HCT116 (cell line): ENCODE measurements at regions of chr17 and their contacts with region 1.

Region 1: GRCh38 chr17:64129764-64130558 is at the start of gene ERN1:
- DNase-seq: peak; percentile 86
- ATAC-seq: peak; percentile 92
- H3K4me3 ChIP-seq: peak within 1 kb of the TSS; percentile 56 to 77
- H3K27ac ChIP-seq: peak within 1 kb of the TSS; percentile 74
- H3K4me1 ChIP-seq: peaks cover 11 to 20% of the 10 kb centered on the region in 2 experiments
- H3K27me3 ChIP-seq: no peaks in the 10 kb centered on the region
- CTCF ChIP-seq: no peak
- POLR2A ChIP-seq: peak; percentile 92
- RAD21 ChIP-seq: peak; percentile 11; the same call in 1 of the 2 replicates
- total RNA-seq, gene ERN1: 28.2 TPM

Region 2: DNA sequence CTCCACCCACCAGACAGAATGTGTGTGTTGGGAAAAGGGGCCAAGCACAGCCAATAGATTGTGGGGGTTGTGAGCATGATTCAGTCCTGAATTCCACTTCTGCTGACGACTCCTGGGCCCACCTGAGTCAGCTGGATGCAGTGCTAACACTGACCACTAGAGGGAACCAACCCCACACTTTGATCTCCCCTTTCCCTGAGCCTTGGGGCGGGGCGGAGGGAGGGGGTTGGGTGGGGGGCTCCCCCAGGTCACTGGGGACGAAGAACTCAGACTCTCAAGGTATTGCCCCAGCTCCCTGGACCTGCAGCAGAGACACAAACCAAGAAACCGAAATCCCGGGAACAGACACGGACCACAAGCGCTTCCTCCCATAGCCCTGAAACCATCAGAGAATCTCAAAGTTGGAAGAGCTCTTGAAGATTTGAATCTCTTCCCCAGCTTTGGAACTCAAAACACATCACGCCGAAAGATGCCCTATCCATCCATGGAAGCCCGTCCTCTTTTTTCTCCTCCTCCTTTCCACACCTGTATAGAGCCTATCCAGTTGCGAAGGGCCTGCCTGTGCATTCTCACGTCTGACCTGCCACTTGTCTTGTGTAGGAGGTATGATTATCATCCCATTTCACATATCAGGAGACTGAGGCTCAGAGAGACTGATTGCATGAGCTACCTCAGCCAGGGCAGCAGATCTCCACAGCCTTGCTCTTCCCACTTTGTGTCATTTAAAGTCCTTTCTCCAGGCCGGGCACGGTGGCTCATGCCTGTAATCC is 218.1 kb before region 1 on chr17:
- CTCF ChIA-PET with region 1: interaction called, 28 read pairs
- POLR2A ChIA-PET with region 1: no interaction called
- RAD21 ChIA-PET with region 1: interaction called in 1 of 2 experiments, 7 read pairs
- intact Hi-C with region 1: no loop called
- DNase-seq: peak; percentile 16
- ATAC-seq: peak; percentile 86
- H3K4me3 ChIP-seq: no peak overlapping the region
- H3K27ac ChIP-seq: no peak overlapping the region
- H3K4me1 ChIP-seq: no peaks in the 10 kb centered on the region
- H3K27me3 ChIP-seq: no peaks in the 10 kb centered on the region; the same call in 1 of the 2 replicates
- CTCF ChIP-seq: peak; percentile 57 to 78 (median 59); a peak in 4 of 6 replicates
- POLR2A ChIP-seq: no peak
- RAD21 ChIP-seq: peak; percentile 62

Region 3: GRCh38 chr17:63946440-63947367 is 183.3 kb before region 1 on chr17:
- CTCF ChIA-PET with region 1: interaction called, 22 read pairs
- POLR2A ChIA-PET with region 1: interaction called, 3 read pairs
- RAD21 ChIA-PET with region 1: interaction called in 1 of 2 experiments, 5 read pairs
- intact Hi-C with region 1: no loop called
- DNase-seq: peak; percentile 22
- ATAC-seq: peak; percentile 86
- H3K4me3 ChIP-seq: no peak overlapping the region
- H3K27ac ChIP-seq: no peak overlapping the region
- H3K4me1 ChIP-seq: peaks cover 0 to 10% of the 10 kb centered on the region in 2 experiments; a peak in 1 of 4 replicates
- H3K27me3 ChIP-seq: no peaks in the 10 kb centered on the region
- CTCF ChIP-seq: peak; percentile 58 to 83 (median 83)
- POLR2A ChIP-seq: no peak
- RAD21 ChIP-seq: no peak; the same call in 1 of the 2 replicates

Region 4: GRCh38 chr17:64025732-64026294 is 104.1 kb before region 1 on chr17:
- CTCF ChIA-PET with region 1: interaction called, 519 read pairs
- POLR2A ChIA-PET with region 1: interaction called, 21 read pairs
- RAD21 ChIA-PET with region 1: interaction called, 44 to 66 read pairs
- intact Hi-C with region 1: loop called (anchors 1 kb)
- DNase-seq: peak; percentile 84
- ATAC-seq: peak; percentile 97
- H3K4me3 ChIP-seq: peak overlapping the region; percentile 45 to 50
- H3K27ac ChIP-seq: no peak overlapping the region
- H3K4me1 ChIP-seq: peaks cover 3 to 11% of the 10 kb centered on the region in 2 experiments; a peak in 3 of 4 replicates
- H3K27me3 ChIP-seq: no peaks in the 10 kb centered on the region
- CTCF ChIP-seq: peak; percentile 99 to 100 (median 100)
- POLR2A ChIP-seq: peak; percentile 63
- RAD21 ChIP-seq: peak; percentile 88

Region 5: GRCh38 chr17:64063766-64064224 is 66.2 kb before region 1 on chr17:
- CTCF ChIA-PET with region 1: interaction called, 158 read pairs
- POLR2A ChIA-PET with region 1: interaction called, 8 read pairs
- RAD21 ChIA-PET with region 1: interaction called, 28 to 36 read pairs
- intact Hi-C with region 1: loop called (anchors 1 kb)
- DNase-seq: no peak
- ATAC-seq: peak; percentile 97
- H3K4me3 ChIP-seq: no peak overlapping the region
- H3K27ac ChIP-seq: no peak overlapping the region
- H3K4me1 ChIP-seq: no peaks in the 10 kb centered on the region
- H3K27me3 ChIP-seq: no peaks in the 10 kb centered on the region
- CTCF ChIP-seq: peak; percentile 45 to 81 (median 72)
- POLR2A ChIP-seq: no peak
- RAD21 ChIP-seq: peak; percentile 91

Region 6: DNA sequence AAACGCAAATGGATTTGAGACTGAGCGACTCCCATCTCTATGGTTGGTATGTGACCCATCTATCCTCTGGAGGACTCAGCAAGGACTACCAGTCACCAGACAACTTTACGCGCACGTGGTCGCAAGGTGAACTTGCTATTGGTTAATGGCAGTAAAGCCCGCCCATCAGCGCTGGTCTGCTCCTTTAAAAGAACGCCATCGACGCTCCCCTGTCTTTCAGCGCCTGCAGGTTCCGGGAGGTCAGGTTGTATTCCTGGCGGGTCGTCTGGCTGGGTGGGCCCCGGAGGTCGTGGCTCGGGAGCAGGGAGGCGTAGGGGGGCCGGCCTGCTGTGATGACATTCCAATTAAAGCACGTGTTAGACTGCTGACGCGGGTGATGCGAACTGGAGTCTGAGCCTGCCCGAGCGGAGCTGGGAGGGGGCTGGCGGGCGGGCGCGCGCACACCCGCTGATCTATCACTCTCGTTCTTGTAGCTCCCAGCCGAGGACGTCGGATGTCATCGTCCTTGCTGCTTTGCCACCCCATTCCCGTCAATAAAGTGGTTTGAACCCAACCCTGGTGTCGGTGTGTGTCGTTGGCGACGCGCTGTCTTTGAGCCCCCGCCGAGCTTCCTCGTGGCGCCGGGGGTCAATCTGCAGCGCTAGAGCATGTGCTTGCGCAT is 15.9 kb after region 1 on chr17:
- CTCF ChIA-PET with region 1: interaction called, 26 read pairs
- POLR2A ChIA-PET with region 1: interaction called, 57 read pairs
- RAD21 ChIA-PET with region 1: interaction called in 1 of 2 experiments, 4 read pairs
- intact Hi-C with region 1: no loop called
- DNase-seq: peak; percentile 100
- ATAC-seq: peak; percentile 88
- H3K4me3 ChIP-seq: peak overlapping the region; percentile 74 to 88
- H3K27ac ChIP-seq: peak overlapping the region; percentile 95
- H3K4me1 ChIP-seq: peaks cover 6 to 29% of the 10 kb centered on the region in 2 experiments; a peak in 3 of 4 replicates
- H3K27me3 ChIP-seq: no peaks in the 10 kb centered on the region
- CTCF ChIP-seq: no peak
- POLR2A ChIP-seq: peak; percentile 100
- RAD21 ChIP-seq: no peak

Region 7: DNA sequence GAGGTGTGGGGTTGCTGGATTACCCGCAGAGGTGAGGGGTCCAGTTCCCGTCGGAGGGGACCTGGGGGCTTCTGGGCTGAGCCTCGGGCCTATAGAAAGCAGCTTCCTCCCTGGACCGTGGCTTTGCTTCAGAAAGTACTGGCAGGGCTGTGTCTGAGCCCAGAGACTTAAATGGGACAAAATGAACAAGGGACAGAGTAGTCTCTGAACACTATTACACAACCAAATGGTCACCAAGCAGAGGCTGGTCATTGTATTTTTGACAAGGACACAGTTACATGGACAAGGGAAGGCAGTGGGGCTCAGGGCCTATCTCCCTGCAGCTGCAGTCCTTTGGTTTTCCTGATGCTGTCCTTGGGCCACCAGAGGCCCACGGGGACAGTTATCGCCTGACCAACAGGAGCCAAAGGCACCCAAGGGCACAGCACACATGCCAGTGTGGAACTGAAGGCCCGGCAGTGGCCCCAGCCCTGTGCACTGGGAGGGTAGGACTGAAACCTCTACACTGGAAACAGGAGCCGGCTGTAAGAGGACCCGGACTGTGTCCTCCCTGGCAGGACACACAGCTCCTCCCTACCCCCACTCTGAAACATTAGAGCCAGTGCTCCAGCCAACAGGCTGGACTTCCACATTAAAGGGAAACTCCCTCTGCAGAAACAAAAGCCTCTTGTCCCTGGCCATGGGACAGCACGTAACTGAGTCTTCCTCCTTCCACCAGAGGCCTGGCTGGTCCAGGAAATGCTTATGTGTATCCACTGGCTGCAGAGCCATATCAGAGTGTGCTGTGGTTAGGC is 26.0 kb after region 1 on chr17:
- CTCF ChIA-PET with region 1: no interaction called
- POLR2A ChIA-PET with region 1: no interaction called
- RAD21 ChIA-PET with region 1: no interaction called
- intact Hi-C with region 1: no loop called
- DNase-seq: no peak
- ATAC-seq: peak; percentile 42
- H3K4me3 ChIP-seq: no peak overlapping the region
- H3K27ac ChIP-seq: no peak overlapping the region
- H3K4me1 ChIP-seq: peaks cover 7 to 15% of the 10 kb centered on the region in 2 experiments; a peak in 2 of 4 replicates
- H3K27me3 ChIP-seq: no peaks in the 10 kb centered on the region
- CTCF ChIP-seq: no peak
- POLR2A ChIP-seq: no peak
- RAD21 ChIP-seq: no peak

Region 8: DNA sequence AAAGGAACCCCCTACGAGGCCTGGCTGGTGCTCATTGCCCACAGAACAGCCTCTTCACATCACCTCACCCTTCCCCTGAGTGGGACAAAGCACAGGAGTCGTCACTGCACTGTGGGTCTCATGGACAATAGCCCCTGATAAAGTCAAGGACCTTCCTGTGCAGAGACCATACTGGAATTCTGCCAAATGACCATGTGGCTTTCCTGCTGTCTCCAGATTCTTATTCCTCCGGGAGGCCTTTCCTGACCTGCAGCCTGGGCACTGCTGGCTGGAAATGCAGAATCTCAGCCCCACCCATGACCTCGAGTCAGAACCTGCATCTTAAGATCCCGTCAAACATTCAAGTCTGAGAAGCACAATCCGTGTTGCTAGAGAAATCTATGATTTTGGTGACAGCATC is 60.5 kb after region 1 on chr17:
- CTCF ChIA-PET with region 1: no interaction called
- POLR2A ChIA-PET with region 1: no interaction called
- RAD21 ChIA-PET with region 1: no interaction called
- intact Hi-C with region 1: no loop called
- DNase-seq: no peak
- ATAC-seq: no peak
- H3K4me3 ChIP-seq: no peak overlapping the region
- H3K27ac ChIP-seq: no peak overlapping the region
- H3K4me1 ChIP-seq: peaks cover 0 to 7% of the 10 kb centered on the region in 2 experiments; a peak in 1 of 4 replicates
- H3K27me3 ChIP-seq: no peaks in the 10 kb centered on the region
- CTCF ChIP-seq: no peak
- POLR2A ChIP-seq: no peak
- RAD21 ChIP-seq: no peak